PC-3 (cell line): ENCODE measurements at regions of chr1 and their contacts with region 1.

Region 1: DNA sequence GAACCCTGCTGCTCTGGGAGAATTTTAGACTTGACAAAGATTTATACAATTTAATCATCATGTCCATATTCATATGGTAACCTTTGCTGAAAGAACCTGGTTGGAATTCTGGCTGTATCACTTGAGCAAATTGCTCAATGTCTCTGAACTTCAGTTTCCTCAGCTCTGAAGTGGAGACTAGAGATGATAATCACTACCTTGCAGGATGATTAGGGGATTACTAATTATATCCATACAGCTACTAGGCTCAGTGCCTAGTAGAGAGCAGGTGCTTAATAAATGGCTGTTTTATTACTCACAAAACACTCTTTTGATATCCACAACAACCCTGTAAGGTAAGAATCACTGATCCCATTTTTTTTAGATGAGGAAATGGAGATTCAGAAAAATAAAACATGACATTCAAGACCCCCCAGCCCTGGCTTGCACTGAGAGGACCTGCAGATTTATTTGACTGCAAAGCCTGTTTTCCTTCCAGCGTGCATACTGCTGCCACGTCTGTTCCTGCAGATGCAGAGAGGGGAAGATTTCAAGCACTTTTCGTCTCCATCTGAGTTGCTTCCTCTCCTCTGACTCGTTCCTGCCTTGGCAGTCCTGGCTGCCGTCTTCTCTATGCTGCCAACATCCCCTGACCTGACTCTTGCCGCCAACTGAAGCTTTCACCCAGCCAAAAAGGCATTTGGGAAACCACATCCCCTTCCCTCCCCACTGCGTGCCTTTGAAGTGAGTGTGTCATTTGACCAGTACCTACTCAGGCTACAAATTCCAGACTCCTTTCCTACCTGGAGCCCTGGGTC is 203.0 kb downstream of the PLPP3 start:
- DNase-seq: peak; percentile 97
- ATAC-seq: peak; percentile 77
- H3K4me3 ChIP-seq: peak overlapping the region; percentile 44; the same call in 1 of the 2 replicates
- H3K27ac ChIP-seq: peak overlapping the region; percentile 76
- H3K4me1 ChIP-seq: peaks cover 66% of the 10 kb centered on the region
- H3K27me3 ChIP-seq: no peaks in the 10 kb centered on the region
- CTCF ChIP-seq: no peak

Region 2: DNA sequence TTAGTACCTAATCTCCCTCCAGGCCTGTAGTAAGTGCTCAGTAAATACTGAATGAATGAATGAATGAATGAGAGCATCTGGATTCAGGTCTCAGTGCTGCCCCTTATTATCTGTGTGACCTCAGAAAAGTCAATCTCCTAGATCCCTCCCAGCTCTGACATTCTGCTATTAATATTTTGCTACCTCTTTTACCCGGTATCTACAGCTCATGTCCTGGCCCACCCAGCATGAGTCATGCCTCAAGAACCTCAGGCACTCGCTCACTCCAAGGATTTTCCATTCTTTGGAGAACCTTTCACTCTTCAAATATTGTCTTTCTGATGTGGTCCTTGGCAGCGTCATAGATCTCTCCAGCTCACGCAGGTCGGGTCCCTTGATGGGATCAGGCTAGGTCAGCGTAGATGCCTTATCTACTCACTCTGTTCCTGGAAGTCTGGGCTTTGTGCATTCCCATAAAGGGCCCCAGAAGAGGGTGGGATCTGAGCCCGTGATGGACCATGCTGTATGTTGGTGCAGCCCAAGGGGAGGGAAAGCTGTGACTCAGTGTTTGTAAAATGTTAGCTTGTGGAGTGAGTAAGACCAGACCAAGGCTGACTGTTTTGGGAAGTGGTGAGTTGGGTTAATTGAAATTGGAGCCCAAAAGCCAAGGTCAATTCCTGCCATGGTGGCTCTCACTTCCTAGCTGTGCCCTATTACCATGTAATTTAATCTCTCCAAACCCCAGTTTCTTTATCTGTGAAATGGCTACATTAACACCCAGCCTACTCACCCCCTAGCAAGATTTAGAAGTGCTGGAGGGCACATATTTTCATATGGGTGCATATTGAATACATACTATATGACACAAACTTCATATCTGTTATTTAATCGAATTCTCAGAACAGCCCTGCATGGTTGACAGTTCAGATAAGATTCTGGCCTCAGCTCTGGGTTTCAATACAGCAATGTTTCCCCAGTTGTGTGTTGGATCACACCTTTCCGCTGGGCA is 947.1 kb before region 1 on chr1:
- CTCF ChIA-PET with region 1: no interaction called
- POLR2A ChIA-PET with region 1: no interaction called
- intact Hi-C with region 1: loop called (anchors 10 kb)
- DNase-seq: peak; percentile 99
- ATAC-seq: peak; percentile 87
- H3K4me3 ChIP-seq: no peak overlapping the region
- H3K27ac ChIP-seq: peak overlapping the region; percentile 99
- H3K4me1 ChIP-seq: peaks cover 46% of the 10 kb centered on the region
- H3K27me3 ChIP-seq: no peaks in the 10 kb centered on the region
- CTCF ChIP-seq: no peak

Region 3: DNA sequence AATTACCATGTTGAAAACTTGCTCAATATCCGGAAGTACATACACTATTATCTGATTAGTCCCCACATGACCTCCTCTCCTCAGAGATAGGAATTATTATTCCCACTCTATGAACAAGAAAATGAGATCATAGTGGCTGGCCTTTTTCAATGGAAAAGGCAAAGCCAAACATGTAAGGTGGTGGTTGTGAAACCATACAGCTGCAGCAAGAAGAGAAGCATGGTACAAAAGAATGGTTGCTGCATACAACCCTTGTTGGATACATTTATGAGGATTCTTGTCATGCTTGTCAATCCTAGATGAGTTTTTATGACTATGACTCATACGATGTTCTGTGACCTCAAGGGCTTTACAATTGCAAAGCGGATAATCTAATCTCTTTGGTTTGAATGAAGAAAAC is 311.7 kb before region 1 on chr1:
- CTCF ChIA-PET with region 1: no interaction called
- POLR2A ChIA-PET with region 1: no interaction called
- intact Hi-C with region 1: loop called (anchors 10 kb)
- DNase-seq: peak; percentile 92
- ATAC-seq: peak; percentile 74
- H3K4me3 ChIP-seq: no peak overlapping the region
- H3K27ac ChIP-seq: peak overlapping the region; percentile 25; the same call in 1 of the 2 replicates
- H3K4me1 ChIP-seq: peaks cover 50% of the 10 kb centered on the region
- H3K27me3 ChIP-seq: no peaks in the 10 kb centered on the region
- CTCF ChIP-seq: no peak

Region 4: DNA sequence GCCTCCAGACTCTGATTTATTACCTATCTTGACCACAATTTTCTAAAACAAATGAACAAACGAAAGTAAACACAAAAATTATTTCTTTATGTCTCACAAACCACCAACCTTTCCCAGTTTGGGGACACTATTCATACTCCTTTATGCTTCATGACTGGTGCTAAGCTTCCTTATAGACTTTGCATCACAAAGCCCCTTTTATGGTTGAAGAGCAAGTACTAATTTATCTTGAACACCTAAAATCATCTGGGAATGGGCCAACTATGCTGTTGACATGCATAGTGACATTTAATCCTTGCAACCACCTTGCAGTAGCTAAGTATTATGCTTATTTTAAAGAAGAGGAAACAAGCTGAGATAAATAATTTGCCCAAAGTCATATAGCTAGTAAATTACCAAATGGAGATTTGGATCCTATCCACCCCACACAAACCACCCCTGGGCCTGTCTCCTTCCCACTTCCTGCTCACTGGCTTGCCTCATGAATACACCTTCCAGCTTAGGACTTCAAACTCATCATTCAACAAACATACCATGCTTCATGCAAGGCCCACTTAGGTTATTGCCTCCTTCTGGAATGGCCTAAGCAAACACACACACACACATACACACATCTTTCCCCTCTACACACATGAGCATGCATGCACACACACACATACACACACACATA is 10.8 kb after region 1 on chr1:
- CTCF ChIA-PET with region 1: no interaction called
- POLR2A ChIA-PET with region 1: no interaction called
- intact Hi-C with region 1: loop called (anchors 1 kb)
- DNase-seq: peak; percentile 87
- ATAC-seq: peak; percentile 81
- H3K4me3 ChIP-seq: no peak overlapping the region
- H3K27ac ChIP-seq: peak overlapping the region; percentile 85
- H3K4me1 ChIP-seq: peaks cover 61% of the 10 kb centered on the region
- H3K27me3 ChIP-seq: no peaks in the 10 kb centered on the region
- CTCF ChIP-seq: no peak

Region 5: GRCh38 chr1:56472860-56473259 is 96.5 kb after region 1 on chr1:
- CTCF ChIA-PET with region 1: interaction called, 6 read pairs
- POLR2A ChIA-PET with region 1: no interaction called
- intact Hi-C with region 1: loop called (anchors 5 kb)
- DNase-seq: no peak
- ATAC-seq: no peak
- H3K4me3 ChIP-seq: no peak overlapping the region
- H3K27ac ChIP-seq: no peak overlapping the region
- H3K4me1 ChIP-seq: peaks cover 35% of the 10 kb centered on the region
- H3K27me3 ChIP-seq: no peaks in the 10 kb centered on the region
- CTCF ChIP-seq: no peak